Dendritic cell treated with granulocyte-macrophage colony-stimulating factor and Interleukin-4, amounts not matched to agents 40 ng/mL and 50 ng/mL, for 4 days (primary cell): ENCODE measurements at regions of chr1 and their contacts with region 1.

Region 1: GRCh38 chr1:16009030-16009709 is 5.1 kb downstream of the SRARP start:
- H3K4me3 Mint-ChIP-seq: no peak overlapping the region
- H3K27ac Mint-ChIP-seq: no peak overlapping the region
- H3K4me1 Mint-ChIP-seq: peaks cover 5% of the 10 kb centered on the region
- H3K27me3 Mint-ChIP-seq: peaks cover 15% of the 10 kb centered on the region

Region 2: GRCh38 chr1:16032388-16033103 is 23.4 kb after region 1 on chr1:
- intact Hi-C with region 1: loop called (anchors 1 kb)
- H3K4me3 Mint-ChIP-seq: no peak overlapping the region
- H3K27ac Mint-ChIP-seq: no peak overlapping the region
- H3K4me1 Mint-ChIP-seq: peaks cover 5% of the 10 kb centered on the region
- H3K27me3 Mint-ChIP-seq: peaks cover 37% of the 10 kb centered on the region

Region 3: GRCh38 chr1:16055613-16056520 is 46.7 kb after region 1 on chr1:
- intact Hi-C with region 1: loop called (anchors 1 kb)
- H3K4me3 Mint-ChIP-seq: no peak overlapping the region
- H3K27ac Mint-ChIP-seq: no peak overlapping the region
- H3K4me1 Mint-ChIP-seq: peaks cover 8% of the 10 kb centered on the region
- H3K27me3 Mint-ChIP-seq: peaks cover 8% of the 10 kb centered on the region